H1 (cell line): ENCODE measurements at regions of chr6 and their contacts with region 1.

Region 1: GRCh38 chr6:56851541-56852259 is 103.2 kb upstream of the BEND6 start:
- DNase-seq: peak in 1 of 2 experiments; percentile 69
- H3K4me3 ChIP-seq: peak overlapping the region; percentile 74 to 82 (median 79)
- H3K27ac ChIP-seq: no peak overlapping the region
- H3K4me1 ChIP-seq: peaks cover 5 to 18% (median 14%) of the 10 kb centered on the region in 4 experiments; a peak in 6 of 7 replicates
- H3K27me3 ChIP-seq: no peaks in the 10 kb centered on the region
- CTCF ChIP-seq: peak in 2 of 3 experiments; percentile 66 to 71; a peak in 3 of 4 replicates
- EP300 ChIP-seq: peak in 1 of 2 experiments; percentile 91; a peak in 1 of 3 replicates
- POLR2A ChIP-seq: peak in 1 of 2 experiments; percentile 58; a peak in 1 of 3 replicates
- RAD21 ChIP-seq: peak; percentile 75 to 84

Region 2: DNA sequence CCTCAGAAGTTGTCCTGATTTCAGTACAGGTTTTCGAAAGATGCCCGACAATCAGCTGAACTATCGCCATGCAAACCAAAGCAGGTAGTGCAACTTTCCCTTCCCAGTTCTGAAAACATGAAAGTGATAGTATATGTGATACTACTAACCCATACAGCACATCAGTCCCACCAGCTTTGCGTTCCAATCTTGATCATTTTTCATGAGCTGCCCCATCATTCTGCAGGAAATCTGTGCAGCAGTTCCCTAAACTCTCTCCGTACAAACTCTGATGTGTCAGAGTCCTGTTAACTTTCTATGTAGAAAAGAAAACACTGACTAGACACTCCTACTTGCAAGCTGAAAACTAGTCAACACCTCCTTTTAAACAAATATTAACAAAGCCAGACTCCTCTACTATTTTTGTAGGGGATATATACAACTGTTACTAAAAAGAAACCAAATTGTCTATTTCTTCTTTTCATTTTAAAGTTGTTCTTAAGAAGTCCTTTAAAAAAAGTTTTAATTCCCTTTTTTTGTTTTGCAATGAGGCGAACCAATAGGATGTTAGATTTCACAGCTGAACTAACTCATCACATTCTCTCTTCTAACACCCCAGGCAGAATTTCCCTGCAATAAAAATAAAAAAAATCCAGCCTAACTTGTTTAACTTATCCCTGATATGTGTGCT is 109.4 kb before region 1 on chr6:
- CTCF ChIA-PET with region 1: interaction called, 10 read pairs
- POLR2A ChIA-PET with region 1: no interaction called
- DNase-seq: no peak
- H3K4me3 ChIP-seq: no peak overlapping the region; a peak in 1 of 8 replicates
- H3K27ac ChIP-seq: no peak overlapping the region
- H3K4me1 ChIP-seq: peaks cover 3 to 25% (median 16%) of the 10 kb centered on the region in 4 experiments; a peak in 6 of 7 replicates
- H3K27me3 ChIP-seq: no peaks in the 10 kb centered on the region
- CTCF ChIP-seq: no peak
- EP300 ChIP-seq: no peak
- POLR2A ChIP-seq: no peak
- RAD21 ChIP-seq: no peak

Region 3: DNA sequence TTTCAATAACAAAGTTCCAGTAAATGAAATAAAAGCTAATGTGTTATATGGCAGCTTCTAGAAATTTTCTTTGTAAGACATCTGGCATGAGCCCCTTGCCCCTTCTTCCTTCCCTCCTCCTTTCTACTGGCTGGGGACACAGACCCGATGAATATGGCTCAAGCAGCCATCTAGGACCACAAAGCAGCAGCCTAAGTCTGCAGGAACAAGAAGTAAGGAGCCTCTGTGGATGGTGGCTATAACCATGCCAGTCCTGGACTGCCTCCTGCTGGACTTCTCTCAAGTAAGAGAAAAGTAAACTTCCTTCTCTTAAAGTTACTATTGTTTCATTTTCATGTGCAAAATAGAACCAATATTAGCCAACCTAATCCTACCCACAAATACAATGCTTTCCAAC is 94.1 kb before region 1 on chr6:
- CTCF ChIA-PET with region 1: interaction called, 28 read pairs
- POLR2A ChIA-PET with region 1: no interaction called
- DNase-seq: no peak
- H3K4me3 ChIP-seq: no peak overlapping the region
- H3K27ac ChIP-seq: no peak overlapping the region
- H3K4me1 ChIP-seq: peaks cover 0 to 18% (median 12%) of the 10 kb centered on the region in 4 experiments; a peak in 6 of 7 replicates
- H3K27me3 ChIP-seq: no peaks in the 10 kb centered on the region
- CTCF ChIP-seq: peak in 2 of 3 experiments; percentile 49 to 61; a peak in 3 of 4 replicates
- EP300 ChIP-seq: no peak
- POLR2A ChIP-seq: no peak
- RAD21 ChIP-seq: peak; percentile 73 to 79

Region 4: GRCh38 chr6:56767892-56768531 is 83.7 kb before region 1 on chr6:
- CTCF ChIA-PET with region 1: interaction called, 13 read pairs
- POLR2A ChIA-PET with region 1: interaction called, 3 read pairs
- DNase-seq: no peak
- H3K4me3 ChIP-seq: no peak overlapping the region
- H3K27ac ChIP-seq: no peak overlapping the region
- H3K4me1 ChIP-seq: peaks cover 0 to 10% (median 6%) of the 10 kb centered on the region in 4 experiments; a peak in 4 of 7 replicates
- H3K27me3 ChIP-seq: no peaks in the 10 kb centered on the region
- CTCF ChIP-seq: peak in 1 of 3 experiments; percentile 11; a peak in 1 of 4 replicates
- EP300 ChIP-seq: no peak
- POLR2A ChIP-seq: no peak
- RAD21 ChIP-seq: peak; percentile 21 to 41

Region 5: GRCh38 chr6:56775498-56776166 is 76.1 kb before region 1 on chr6:
- CTCF ChIA-PET with region 1: interaction called, 10 read pairs
- POLR2A ChIA-PET with region 1: interaction called, 6 read pairs
- DNase-seq: no peak
- H3K4me3 ChIP-seq: peak overlapping the region in 1 of 4 experiments; percentile 24; a peak in 2 of 8 replicates
- H3K27ac ChIP-seq: peak overlapping the region; percentile 65
- H3K4me1 ChIP-seq: peaks cover 3 to 14% (median 12%) of the 10 kb centered on the region in 4 experiments; a peak in 6 of 7 replicates
- H3K27me3 ChIP-seq: no peaks in the 10 kb centered on the region
- CTCF ChIP-seq: no peak
- EP300 ChIP-seq: peak in 1 of 2 experiments; percentile 45; a peak in 1 of 3 replicates
- POLR2A ChIP-seq: no peak
- RAD21 ChIP-seq: no peak; a peak in 1 of 4 replicates

Region 6: DNA sequence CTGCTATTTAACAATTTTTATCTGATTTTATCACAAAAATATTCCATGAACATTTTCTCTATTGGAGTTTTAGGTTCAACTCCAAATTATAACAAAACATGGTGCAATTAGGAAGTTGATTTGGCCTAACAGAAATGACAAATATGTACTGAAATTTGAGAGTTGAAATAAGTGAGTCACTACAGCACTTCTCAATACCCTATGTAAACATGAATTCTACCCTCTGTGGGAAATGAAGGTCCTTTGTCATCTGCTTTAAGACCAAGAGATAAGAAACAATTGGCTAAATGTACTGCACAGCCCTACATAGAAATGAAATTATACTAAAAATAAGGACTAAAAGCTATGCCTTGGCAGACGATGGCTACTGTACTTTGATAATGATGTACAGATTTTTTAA is 17.0 kb after region 1 on chr6:
- CTCF ChIA-PET with region 1: interaction called, 24 read pairs
- POLR2A ChIA-PET with region 1: interaction called, 5 read pairs
- DNase-seq: no peak
- H3K4me3 ChIP-seq: no peak overlapping the region
- H3K27ac ChIP-seq: no peak overlapping the region
- H3K4me1 ChIP-seq: peaks cover 0 to 5% (median under 1%) of the 10 kb centered on the region in 4 experiments; a peak in 4 of 7 replicates
- H3K27me3 ChIP-seq: no peaks in the 10 kb centered on the region
- CTCF ChIP-seq: no peak
- EP300 ChIP-seq: no peak
- POLR2A ChIP-seq: no peak
- RAD21 ChIP-seq: no peak